AG04450 (cell line): ENCODE measurements at regions of chr2 and their contacts with region 1.

Region 1: DNA sequence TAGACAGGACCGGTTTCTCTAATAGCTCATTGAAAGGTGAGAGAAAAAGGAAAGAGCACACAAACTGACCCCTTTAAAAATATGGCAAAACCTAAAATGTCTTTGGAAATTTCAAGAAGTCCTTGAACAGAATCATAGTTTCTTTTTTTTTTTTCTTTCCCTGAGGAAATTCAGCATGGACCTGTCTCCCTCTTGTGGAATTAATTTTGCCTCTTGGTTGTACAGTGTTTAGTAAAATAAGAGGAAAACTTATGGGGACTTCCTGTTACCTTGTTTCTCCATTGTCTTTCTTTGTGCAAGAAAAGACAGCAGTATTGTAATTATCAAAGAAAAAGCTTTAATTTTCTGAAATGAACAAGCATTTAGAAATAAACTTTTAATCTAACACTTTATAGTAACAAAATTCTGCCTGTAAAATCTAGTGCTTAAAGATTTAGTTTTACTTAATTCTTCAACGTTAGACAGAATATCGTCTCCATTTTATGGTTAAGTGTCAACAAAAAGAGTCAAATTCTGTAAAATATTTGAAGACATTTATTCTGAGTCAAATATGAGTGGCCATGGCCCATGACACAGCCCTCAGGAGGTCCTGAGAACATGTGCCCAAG is 176.3 kb upstream of the NABP1 start:
- DNase-seq: no peak
- H3K4me3 ChIP-seq: no peak overlapping the region
- H3K27ac ChIP-seq: no peak overlapping the region
- H3K27me3 ChIP-seq: no peaks in the 10 kb centered on the region
- CTCF ChIP-seq: peak; percentile 79

Region 2: GRCh38 chr2:191158193-191158592 is 343.5 kb before region 1 on chr2:
- CTCF ChIA-PET with region 1: interaction called, 15 read pairs
- POLR2A ChIA-PET with region 1: no interaction called
- DNase-seq: no peak
- H3K4me3 ChIP-seq: no peak overlapping the region
- H3K27ac ChIP-seq: no peak overlapping the region
- H3K27me3 ChIP-seq: no peaks in the 10 kb centered on the region
- CTCF ChIP-seq: no peak

Region 3: DNA sequence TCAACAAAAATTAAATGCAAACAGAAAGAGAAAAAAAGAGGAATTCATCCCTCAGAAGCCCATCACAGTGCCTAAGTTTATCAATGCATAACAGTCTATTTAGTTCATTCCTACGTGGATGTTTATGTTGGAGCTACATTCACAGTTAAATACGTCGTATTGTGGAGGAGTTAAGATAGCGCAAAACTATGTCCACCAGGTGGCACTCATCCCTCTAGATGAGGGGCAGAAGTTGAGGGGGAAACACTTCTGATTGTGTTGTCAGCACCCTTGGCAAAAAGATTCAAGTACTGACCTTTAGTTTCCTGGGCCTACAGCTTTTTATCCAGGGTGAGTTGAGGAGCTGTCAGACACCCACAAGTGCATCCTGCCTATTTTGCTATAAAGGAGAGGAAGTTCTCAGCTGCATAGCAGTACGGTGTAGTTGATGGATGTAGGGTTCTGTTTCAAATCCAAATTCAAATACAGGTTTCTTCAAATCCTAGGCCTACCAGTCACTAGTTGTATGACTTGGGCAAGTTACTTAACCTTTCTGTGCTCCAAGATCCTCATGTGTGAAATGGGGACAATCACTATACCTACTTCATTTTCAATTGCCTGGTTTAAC is 283.3 kb before region 1 on chr2:
- CTCF ChIA-PET with region 1: interaction called, 117 read pairs
- POLR2A ChIA-PET with region 1: no interaction called
- DNase-seq: peak; percentile 80
- H3K4me3 ChIP-seq: no peak overlapping the region
- H3K27ac ChIP-seq: no peak overlapping the region
- H3K27me3 ChIP-seq: no peaks in the 10 kb centered on the region
- CTCF ChIP-seq: peak; percentile 79

Region 4: DNA sequence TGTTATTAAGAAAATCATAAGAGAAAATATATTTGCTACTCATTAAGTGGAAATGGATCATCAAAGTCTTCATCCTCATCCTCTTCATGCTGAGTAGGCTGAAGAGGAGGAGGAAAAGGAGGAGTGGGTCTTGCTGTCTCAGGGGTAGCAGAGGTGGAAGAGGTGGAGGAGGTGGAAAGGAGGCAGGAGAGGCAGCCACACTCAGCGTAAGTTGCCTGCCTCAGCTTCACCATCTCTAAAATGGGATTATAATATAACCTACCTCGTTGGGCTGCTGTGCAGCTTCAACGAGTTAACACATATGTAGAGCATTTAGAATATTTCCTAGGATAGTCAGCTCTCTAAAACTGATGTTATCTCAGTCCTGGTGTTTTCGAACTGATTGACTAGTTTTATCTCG is 260.8 kb before region 1 on chr2:
- CTCF ChIA-PET with region 1: interaction called, 10 read pairs
- POLR2A ChIA-PET with region 1: no interaction called
- DNase-seq: no peak
- H3K4me3 ChIP-seq: no peak overlapping the region
- H3K27ac ChIP-seq: no peak overlapping the region
- H3K27me3 ChIP-seq: no peaks in the 10 kb centered on the region
- CTCF ChIP-seq: no peak

Region 5: GRCh38 chr2:191302459-191303139 is 199.1 kb before region 1 on chr2:
- CTCF ChIA-PET with region 1: interaction called, 16 read pairs
- POLR2A ChIA-PET with region 1: no interaction called
- DNase-seq: no peak
- H3K4me3 ChIP-seq: no peak overlapping the region
- H3K27ac ChIP-seq: no peak overlapping the region
- H3K27me3 ChIP-seq: no peaks in the 10 kb centered on the region
- CTCF ChIP-seq: peak; percentile 32

Region 6: GRCh38 chr2:191385416-191386160 is 116.1 kb before region 1 on chr2:
- CTCF ChIA-PET with region 1: interaction called, 15 read pairs
- POLR2A ChIA-PET with region 1: no interaction called
- DNase-seq: no peak
- H3K4me3 ChIP-seq: no peak overlapping the region
- H3K27ac ChIP-seq: no peak overlapping the region
- H3K27me3 ChIP-seq: no peaks in the 10 kb centered on the region
- CTCF ChIP-seq: no peak

Region 7: GRCh38 chr2:191521608-191522208 is 20.0 kb after region 1 on chr2:
- CTCF ChIA-PET with region 1: interaction called, 28 read pairs
- POLR2A ChIA-PET with region 1: no interaction called
- DNase-seq: no peak
- H3K4me3 ChIP-seq: no peak overlapping the region
- H3K27ac ChIP-seq: no peak overlapping the region
- H3K27me3 ChIP-seq: no peaks in the 10 kb centered on the region
- CTCF ChIP-seq: peak; percentile 79